ENCODE measurements at regions of chr9 and their contacts with region 1.

Region 1: GRCh38 chr9:76302947-76303940 is 91.0 kb downstream of the RFK start:
- DNase-seq: no peak
- H3K4me3 Mint-ChIP-seq: no peak overlapping the region
- H3K27ac Mint-ChIP-seq: no peak overlapping the region
- H3K4me1 Mint-ChIP-seq: no peaks in the 10 kb centered on the region
- H3K27me3 Mint-ChIP-seq: no peaks in the 10 kb centered on the region
- CTCF ChIP-seq: peak; percentile 24

Region 2: GRCh38 chr9:75265525-75265972 is 1037.7 kb before region 1 on chr9:
- CTCF ChIA-PET with region 1: no interaction called
- intact Hi-C with region 1: loop called (anchors 2 kb)
- DNase-seq: peak; percentile 48
- H3K4me3 Mint-ChIP-seq: no peak overlapping the region
- H3K27ac Mint-ChIP-seq: no peak overlapping the region
- H3K4me1 Mint-ChIP-seq: no peaks in the 10 kb centered on the region
- H3K27me3 Mint-ChIP-seq: no peaks in the 10 kb centered on the region
- CTCF ChIP-seq: peak; percentile 62

Measured in Calu3 (cell line).